ENCODE measurements at regions of chr3 and their contacts with region 1.

Region 1: GRCh38 chr3:113136071-113136470 is 75.3 kb upstream of the BOC start:
- DNase-seq: no peak
- H3K4me3 ChIP-seq: no peak overlapping the region
- H3K27ac ChIP-seq: no peak overlapping the region
- H3K4me1 ChIP-seq: no peaks in the 10 kb centered on the region
- H3K27me3 ChIP-seq: no peaks in the 10 kb centered on the region
- CTCF ChIP-seq: peak; percentile 31 to 66 (median 54)
- POLR2A ChIP-seq: no peak

Region 2: DNA sequence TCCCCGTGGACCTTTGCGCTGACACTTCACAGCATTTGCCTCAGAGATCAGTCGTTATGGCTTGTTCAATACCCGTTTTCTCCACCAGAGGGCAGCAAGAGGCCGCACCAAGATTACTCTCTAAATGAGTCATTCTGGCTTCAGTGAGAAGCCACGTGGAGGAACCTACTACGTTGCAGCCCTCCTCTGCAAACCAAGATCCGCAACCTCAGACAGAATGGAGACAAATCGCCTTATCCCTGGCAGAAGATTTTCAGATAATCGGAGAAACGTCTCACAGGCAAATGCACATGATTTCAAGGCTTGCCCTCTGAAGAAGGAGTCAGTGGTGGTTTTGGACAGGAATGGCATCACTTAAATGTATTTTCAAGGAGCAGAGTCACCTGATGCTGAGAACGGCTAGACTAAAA is 84.8 kb before region 1 on chr3:
- intact Hi-C with region 1: loop called in 1 of 2 experiments (anchors 10 kb)
- DNase-seq: peak; percentile 77 to 97 (median 86)
- H3K4me3 ChIP-seq: peak overlapping the region in 1 of 4 donors; percentile 20
- H3K27ac ChIP-seq: no peak overlapping the region
- H3K4me1 ChIP-seq: peaks cover 0 to 8% of the 10 kb centered on the region in 2 donors
- H3K27me3 ChIP-seq: no peaks in the 10 kb centered on the region
- CTCF ChIP-seq: peak; percentile 90 to 98 (median 96)
- POLR2A ChIP-seq: no peak

Region 3: DNA sequence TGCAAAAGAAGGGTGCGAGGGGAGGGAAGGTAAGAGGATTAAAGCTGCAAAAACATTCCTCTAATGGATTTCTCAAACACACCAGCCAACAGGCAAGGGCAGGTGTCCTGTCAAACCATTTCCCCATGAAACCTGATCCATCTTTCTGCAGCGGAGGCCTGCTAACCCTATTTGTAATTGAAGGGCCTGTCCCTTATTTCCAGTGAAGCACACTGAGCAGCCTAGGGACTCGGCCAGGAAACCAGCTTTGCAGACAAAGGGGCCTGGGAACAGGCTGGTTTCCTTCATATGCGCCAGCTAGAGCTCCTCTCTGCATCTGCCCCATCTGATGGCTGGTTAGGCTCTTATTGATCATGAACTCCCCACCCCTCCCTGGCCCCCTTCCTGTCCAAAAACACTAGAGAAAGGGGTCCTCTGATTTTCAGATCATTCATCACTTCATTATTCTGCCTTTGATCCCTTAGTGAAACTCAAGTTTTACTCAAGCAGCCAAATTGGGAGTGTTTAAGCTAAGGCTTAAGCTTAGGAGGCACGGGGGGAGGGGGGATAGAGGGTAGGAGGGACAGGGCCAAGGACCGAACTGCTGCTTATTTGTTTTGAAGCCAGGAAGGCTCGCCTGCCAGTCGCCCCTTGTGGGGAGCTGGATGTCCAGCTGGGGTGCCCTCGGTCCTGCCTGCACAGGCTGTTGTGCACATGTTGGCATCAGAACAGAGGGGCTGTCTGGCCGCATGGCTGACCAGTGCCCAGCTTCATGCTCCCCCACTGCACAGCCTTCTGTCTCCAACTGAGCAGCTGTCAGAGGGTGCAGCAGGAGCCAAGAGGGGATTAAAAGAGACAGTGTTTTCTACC is 128.4 kb after region 1 on chr3:
- intact Hi-C with region 1: no loop called
- DNase-seq: no peak
- H3K4me3 ChIP-seq: no peak overlapping the region
- H3K27ac ChIP-seq: no peak overlapping the region
- H3K4me1 ChIP-seq: no peaks in the 10 kb centered on the region
- H3K27me3 ChIP-seq: no peaks in the 10 kb centered on the region
- CTCF ChIP-seq: no peak
- POLR2A ChIP-seq: no peak

Region 4: DNA sequence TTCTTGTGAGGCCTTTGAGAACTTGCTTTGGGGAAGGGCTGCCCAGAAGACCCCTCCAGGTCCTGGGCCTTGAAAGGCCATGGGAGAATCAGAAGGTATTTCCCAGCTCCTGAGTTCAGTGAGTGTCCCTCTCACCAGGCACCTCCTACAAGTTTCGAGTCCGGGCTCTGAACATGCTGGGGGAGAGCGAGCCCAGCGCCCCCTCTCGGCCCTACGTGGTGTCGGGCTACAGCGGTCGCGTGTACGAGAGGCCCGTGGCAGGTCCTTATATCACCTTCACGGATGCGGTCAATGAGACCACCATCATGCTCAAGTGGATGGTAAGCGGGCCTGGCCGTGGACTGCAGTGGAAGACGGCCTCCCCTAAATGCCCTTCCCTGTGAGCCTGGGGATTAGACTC is 143.6 kb after region 1 on chr3:
- intact Hi-C with region 1: loop called in 1 of 2 experiments (anchors 5 kb)
- DNase-seq: no peak
- H3K4me3 ChIP-seq: no peak overlapping the region
- H3K27ac ChIP-seq: no peak overlapping the region
- H3K4me1 ChIP-seq: peaks cover 0 to 19% of the 10 kb centered on the region in 2 donors
- H3K27me3 ChIP-seq: no peaks in the 10 kb centered on the region
- CTCF ChIP-seq: no peak
- POLR2A ChIP-seq: no peak

Region 5: GRCh38 chr3:113287803-113288648 is 152.0 kb after region 1 on chr3:
- intact Hi-C with region 1: loop called (anchors 5 kb)
- DNase-seq: peak; percentile 27 to 82 (median 65)
- H3K4me3 ChIP-seq: no peak overlapping the region
- H3K27ac ChIP-seq: no peak overlapping the region
- H3K4me1 ChIP-seq: peaks cover 3 to 11% of the 10 kb centered on the region in 2 donors
- H3K27me3 ChIP-seq: no peaks in the 10 kb centered on the region
- CTCF ChIP-seq: peak; percentile 98 to 100 (median 99)
- POLR2A ChIP-seq: peak in 1 of 2 donors; percentile 14

Measured in adrenal gland (tissue), 19 donors.